ENCODE measurements at regions of chr11 and their contacts with region 1.

Region 1: GRCh38 chr11:130131961-130132850 is 27.4 kb upstream of the ST14 start:
- DNase-seq: peak; percentile 83
- H3K4me3 ChIP-seq: no peak overlapping the region
- H3K27ac ChIP-seq: no peak overlapping the region
- H3K4me1 ChIP-seq: no peaks in the 10 kb centered on the region
- H3K27me3 ChIP-seq: no peaks in the 10 kb centered on the region
- CTCF ChIP-seq: peak; percentile 67 to 84
- POLR2A ChIP-seq: no peak

Region 2: GRCh38 chr11:129785383-129786111 is 346.7 kb before region 1 on chr11:
- CTCF ChIA-PET with region 1: no interaction called
- POLR2A ChIA-PET with region 1: no interaction called
- dilution Hi-C with region 1: no loop called
- intact Hi-C with region 1: loop called (anchors 5 kb)
- DNase-seq: no peak
- H3K4me3 ChIP-seq: no peak overlapping the region
- H3K27ac ChIP-seq: no peak overlapping the region
- H3K4me1 ChIP-seq: no peaks in the 10 kb centered on the region
- H3K27me3 ChIP-seq: peaks cover 2 to 3% of the 10 kb centered on the region in 2 experiments
- CTCF ChIP-seq: no peak
- POLR2A ChIP-seq: no peak

Region 3: DNA sequence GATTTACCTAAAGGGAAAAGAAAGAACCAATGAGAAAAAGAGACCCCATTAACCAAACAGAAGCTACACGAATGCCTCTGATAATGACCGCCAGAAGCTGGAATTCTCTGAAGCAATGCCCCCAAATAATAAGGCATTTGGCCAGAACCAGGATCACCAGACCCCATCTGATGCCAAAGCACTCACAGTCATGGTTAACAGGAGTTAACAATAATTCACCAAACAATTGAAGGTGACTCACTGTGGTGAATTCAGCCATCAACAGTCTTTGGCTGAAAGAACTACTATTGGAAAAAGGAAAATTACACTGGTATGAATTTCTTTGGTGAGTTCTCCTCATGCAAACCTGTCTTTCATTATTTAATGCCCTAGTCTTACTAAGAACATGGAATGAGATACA is 215.0 kb before region 1 on chr11:
- CTCF ChIA-PET with region 1: interaction called, 399 read pairs
- POLR2A ChIA-PET with region 1: no interaction called
- dilution Hi-C with region 1: no loop called
- intact Hi-C with region 1: no loop called
- DNase-seq: no peak
- H3K4me3 ChIP-seq: no peak overlapping the region
- H3K27ac ChIP-seq: no peak overlapping the region
- H3K4me1 ChIP-seq: no peaks in the 10 kb centered on the region
- H3K27me3 ChIP-seq: no peaks in the 10 kb centered on the region
- CTCF ChIP-seq: no peak
- POLR2A ChIP-seq: no peak

Region 4: DNA sequence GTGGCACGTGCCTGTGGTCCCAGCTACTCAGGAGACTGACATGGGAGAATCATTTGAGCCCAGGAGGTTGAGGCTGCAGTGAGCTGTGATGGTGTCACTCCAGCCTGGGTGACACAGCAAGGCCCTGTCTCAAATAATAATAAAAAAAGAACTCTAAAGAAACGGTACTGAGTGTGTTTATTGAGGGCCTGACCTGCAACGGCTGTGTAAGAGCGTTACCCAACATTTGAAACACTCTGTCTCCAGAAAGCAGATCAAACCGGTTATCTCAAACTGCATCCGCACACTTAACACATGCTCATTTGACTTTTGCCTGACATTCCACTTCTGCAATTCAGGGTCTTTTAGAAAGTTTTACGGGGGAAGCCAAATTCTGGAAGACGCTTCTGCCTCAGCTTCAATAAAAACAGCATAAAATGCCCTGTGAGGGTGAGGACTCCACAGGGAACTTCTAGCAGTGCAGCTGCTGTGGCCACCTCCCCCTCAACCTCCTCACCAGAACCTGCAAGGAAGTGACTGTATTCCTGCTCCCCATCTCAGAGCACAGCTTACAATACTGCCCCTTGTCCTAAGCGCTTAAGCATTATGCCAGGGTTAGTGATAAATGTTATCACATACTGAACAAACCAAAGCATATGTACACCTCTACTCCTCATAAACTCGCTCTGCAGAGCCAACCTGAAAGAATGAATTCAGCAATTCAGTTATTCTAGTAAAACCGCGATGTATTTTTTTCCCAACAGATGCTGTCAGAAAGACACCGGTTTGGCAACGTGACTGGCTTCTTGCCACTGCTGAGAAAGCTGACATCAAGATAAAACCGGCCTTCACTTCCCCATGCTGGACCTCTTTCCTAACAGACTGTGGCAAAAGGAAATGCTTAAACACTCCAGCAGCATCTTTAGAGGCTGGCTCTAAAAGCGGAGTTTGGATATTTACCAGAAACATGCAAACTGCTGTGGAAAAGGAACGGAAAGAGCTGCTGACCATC is 181.8 kb before region 1 on chr11:
- CTCF ChIA-PET with region 1: interaction called, 24 read pairs
- POLR2A ChIA-PET with region 1: no interaction called
- dilution Hi-C with region 1: no loop called
- intact Hi-C with region 1: no loop called
- DNase-seq: peak; percentile 77
- H3K4me3 ChIP-seq: peak overlapping the region in 1 of 3 experiments; percentile 25
- H3K27ac ChIP-seq: peak overlapping the region; percentile 54
- H3K4me1 ChIP-seq: peaks cover 19% of the 10 kb centered on the region
- H3K27me3 ChIP-seq: no peaks in the 10 kb centered on the region
- CTCF ChIP-seq: no peak
- POLR2A ChIP-seq: no peak

Region 5: GRCh38 chr11:130069684-130070108 is 62.5 kb before region 1 on chr11 and contains the start of gene APLP2:
- CTCF ChIA-PET with region 1: interaction called, 52 read pairs
- POLR2A ChIA-PET with region 1: interaction called, 5 read pairs
- dilution Hi-C with region 1: no loop called
- intact Hi-C with region 1: loop called (anchors 1 kb)
- DNase-seq: peak; percentile 98
- H3K4me3 ChIP-seq: peak within 1 kb of the TSS; percentile 56 to 96 (median 92)
- H3K27ac ChIP-seq: peak within 1 kb of the TSS; percentile 82
- H3K4me1 ChIP-seq: peaks cover 12% of the 10 kb centered on the region
- H3K27me3 ChIP-seq: no peaks in the 10 kb centered on the region
- CTCF ChIP-seq: no peak
- POLR2A ChIP-seq: peak; percentile 99
- total RNA-seq, gene APLP2: 503 and 543 TPM in 2 replicates

Region 6: DNA sequence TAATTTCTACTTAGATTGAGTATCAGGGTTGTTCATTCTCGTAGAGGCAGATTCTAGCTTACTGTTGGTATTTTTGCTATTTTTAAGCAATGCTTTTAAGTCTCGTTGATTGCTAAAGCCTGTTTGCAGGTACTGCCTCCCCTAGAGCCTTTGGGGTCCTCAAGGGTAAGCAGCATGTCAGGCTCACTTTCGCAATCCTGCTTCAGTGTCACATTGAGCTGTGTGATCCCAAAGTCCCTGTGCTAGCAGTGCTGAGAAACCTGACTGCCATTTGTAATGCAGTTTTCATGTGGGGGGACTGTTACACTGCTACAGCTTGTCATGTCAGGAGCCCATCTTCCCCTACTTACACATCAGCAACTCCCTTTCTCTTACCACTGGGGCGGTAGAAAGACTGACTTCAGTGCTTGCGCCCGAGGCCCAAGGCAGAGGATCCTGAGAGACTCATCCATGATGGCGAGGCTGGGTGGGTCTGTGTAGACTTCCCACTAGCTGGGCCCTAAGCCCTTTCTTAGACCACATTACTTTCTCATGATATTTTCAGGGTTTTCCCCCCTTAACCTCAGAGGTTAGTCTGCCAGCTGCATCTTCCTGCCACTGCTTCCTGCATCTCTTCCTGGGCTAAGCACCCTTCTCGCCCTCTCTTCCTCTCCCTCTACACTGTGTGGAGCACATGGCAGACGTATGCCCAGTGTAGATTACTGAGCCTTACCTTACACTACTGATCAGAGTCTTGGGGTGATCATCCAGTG is 13.4 kb before region 1 on chr11:
- CTCF ChIA-PET with region 1: interaction called, 34 read pairs
- POLR2A ChIA-PET with region 1: interaction called, 3 read pairs
- dilution Hi-C with region 1: no loop called
- intact Hi-C with region 1: no loop called
- DNase-seq: no peak
- H3K4me3 ChIP-seq: no peak overlapping the region
- H3K27ac ChIP-seq: no peak overlapping the region
- H3K4me1 ChIP-seq: peaks cover 62% of the 10 kb centered on the region
- H3K27me3 ChIP-seq: no peaks in the 10 kb centered on the region
- CTCF ChIP-seq: no peak
- POLR2A ChIP-seq: no peak

Region 7: DNA sequence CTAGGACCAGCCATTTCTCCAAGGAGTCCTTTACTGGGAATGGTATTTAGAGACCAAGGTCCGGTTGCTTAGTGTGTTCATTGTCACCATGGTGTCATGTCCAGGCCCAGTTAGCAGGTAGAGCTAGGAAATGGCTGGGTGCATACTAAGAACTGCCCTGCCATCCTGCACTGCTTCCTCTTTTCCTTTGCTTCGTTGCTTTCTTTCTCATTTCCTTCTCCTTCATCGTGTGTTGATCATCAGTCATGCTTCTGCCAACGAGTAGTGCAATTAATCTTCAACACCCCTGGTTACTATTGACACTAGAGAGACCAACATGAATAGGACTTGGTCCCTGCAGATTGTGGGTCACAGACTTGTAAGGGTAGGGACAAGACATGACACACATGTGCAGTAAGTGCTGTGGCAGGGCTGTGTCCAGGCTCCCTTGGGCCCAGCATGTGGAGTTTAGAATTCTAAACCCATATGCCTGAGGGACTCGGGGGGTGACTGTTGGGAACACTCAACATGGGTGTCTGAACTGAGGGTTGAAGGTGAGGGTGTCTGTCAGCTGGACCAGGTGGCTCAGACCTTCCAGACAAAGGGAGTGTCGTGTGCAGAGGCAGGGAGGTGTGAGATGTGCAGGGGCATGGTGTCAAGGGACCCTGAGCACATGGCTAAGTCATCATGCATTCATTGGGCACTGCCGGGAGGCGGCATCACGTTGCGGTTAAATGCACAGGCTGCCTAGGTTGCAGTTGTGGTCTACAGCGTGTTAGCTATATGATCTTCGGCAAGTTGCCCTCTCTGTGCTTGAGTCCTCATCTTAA is 70.0 kb after region 1 on chr11:
- CTCF ChIA-PET with region 1: no interaction called
- POLR2A ChIA-PET with region 1: no interaction called
- dilution Hi-C with region 1: no loop called
- intact Hi-C with region 1: no loop called
- DNase-seq: no peak
- H3K4me3 ChIP-seq: no peak overlapping the region
- H3K27ac ChIP-seq: no peak overlapping the region
- H3K4me1 ChIP-seq: no peaks in the 10 kb centered on the region
- H3K27me3 ChIP-seq: no peaks in the 10 kb centered on the region
- CTCF ChIP-seq: no peak
- POLR2A ChIP-seq: no peak